ENCODE measurements at regions of chr16 and their contacts with region 1.

Region 1: DNA sequence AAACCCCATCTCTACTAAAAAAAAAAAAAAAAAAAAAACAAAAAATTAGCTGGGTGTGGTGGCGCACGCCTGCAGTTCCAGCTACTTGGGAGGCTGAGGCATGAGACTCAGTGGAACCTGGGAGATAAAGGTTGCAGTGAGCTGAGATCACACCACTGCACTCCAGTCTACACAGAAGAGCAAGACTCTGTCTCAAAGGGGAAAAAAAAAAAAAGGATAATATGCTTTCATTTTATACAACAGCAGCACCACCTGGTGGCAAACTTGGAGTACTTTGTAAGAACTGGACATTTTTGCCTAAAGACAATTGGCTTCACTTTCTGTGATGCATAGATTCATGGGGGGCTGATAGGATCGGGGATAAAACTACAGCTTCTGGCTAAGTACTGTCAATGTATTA is 8.5 kb downstream of the CHTF8 start:
- DNase-seq: peak; percentile 51
- H3K4me3 ChIP-seq: no peak overlapping the region
- H3K27ac ChIP-seq: no peak overlapping the region
- H3K27me3 ChIP-seq: no peaks in the 10 kb centered on the region
- CTCF ChIP-seq: peak; percentile 72

Region 2: GRCh38 chr16:68843482-68844210 is 280.3 kb before region 1 on chr16 and contains the start of gene TANGO6:
- CTCF ChIA-PET with region 1: interaction called, 182 read pairs
- POLR2A ChIA-PET with region 1: interaction called, 3 read pairs
- DNase-seq: no peak
- H3K4me3 ChIP-seq: peak within 1 kb of the TSS; percentile 89
- H3K27ac ChIP-seq: peak within 1 kb of the TSS; percentile 85
- H3K27me3 ChIP-seq: no peaks in the 10 kb centered on the region
- CTCF ChIP-seq: peak; percentile 49
- polyA plus RNA-seq, gene TANGO6: 11.6 and 16.2 TPM in 2 replicates

Region 3: DNA sequence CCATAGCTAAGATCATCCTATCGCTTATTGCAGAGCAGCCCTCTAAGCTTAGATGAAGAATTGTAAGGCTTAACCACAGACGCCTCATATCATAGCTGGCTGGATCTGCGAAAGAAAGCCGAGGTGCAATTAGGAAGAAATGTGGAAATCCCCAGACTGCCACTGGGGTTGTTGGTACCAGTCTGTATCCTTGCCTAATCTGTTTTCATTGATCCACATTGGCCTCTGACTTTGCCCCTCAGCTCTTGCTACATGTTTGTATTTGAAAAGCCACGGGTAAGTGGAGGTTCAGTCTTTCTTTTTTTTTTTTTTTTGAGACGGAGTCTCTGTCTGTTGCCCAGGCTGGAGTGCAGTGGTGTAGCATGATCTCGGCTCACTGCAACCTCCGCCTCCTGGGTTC is 231.7 kb before region 1 on chr16:
- CTCF ChIA-PET with region 1: interaction called, 10 read pairs
- POLR2A ChIA-PET with region 1: no interaction called
- DNase-seq: no peak
- H3K4me3 ChIP-seq: no peak overlapping the region
- H3K27ac ChIP-seq: no peak overlapping the region
- H3K27me3 ChIP-seq: no peaks in the 10 kb centered on the region
- CTCF ChIP-seq: no peak

Region 4: GRCh38 chr16:68910051-68910450 is 213.9 kb before region 1 on chr16:
- CTCF ChIA-PET with region 1: interaction called, 104 read pairs
- POLR2A ChIA-PET with region 1: no interaction called
- DNase-seq: no peak
- H3K4me3 ChIP-seq: no peak overlapping the region
- H3K27ac ChIP-seq: no peak overlapping the region
- H3K27me3 ChIP-seq: no peaks in the 10 kb centered on the region
- CTCF ChIP-seq: no peak

Region 5: GRCh38 chr16:69143116-69143515 is 19.2 kb after region 1 on chr16:
- CTCF ChIA-PET with region 1: no interaction called
- POLR2A ChIA-PET with region 1: no interaction called
- DNase-seq: no peak
- H3K4me3 ChIP-seq: no peak overlapping the region
- H3K27ac ChIP-seq: no peak overlapping the region
- H3K27me3 ChIP-seq: no peaks in the 10 kb centered on the region
- CTCF ChIP-seq: 0 out of 2 replicates have a peak, but pooled peaks have one; percentile 10

Region 6: GRCh38 chr16:69286941-69287713 is 163.2 kb after region 1 on chr16:
- CTCF ChIA-PET with region 1: no interaction called
- POLR2A ChIA-PET with region 1: interaction called, 10 read pairs
- DNase-seq: peak; percentile 34
- H3K4me3 ChIP-seq: no peak overlapping the region
- H3K27ac ChIP-seq: no peak overlapping the region
- H3K27me3 ChIP-seq: no peaks in the 10 kb centered on the region
- CTCF ChIP-seq: peak; percentile 59